GM12878 (cell line): ENCODE measurements at regions of chr7 and their contacts with region 1.

Region 1: GRCh38 chr7:27576360-27576944 is 86.2 kb downstream of the HIBADH start:
- DNase-seq: no peak
- ATAC-seq: peak; percentile 76
- H3K4me3 ChIP-seq: no peak overlapping the region
- H3K27ac ChIP-seq: no peak overlapping the region
- H3K4me1 ChIP-seq: no peaks in the 10 kb centered on the region
- H3K27me3 ChIP-seq: no peaks in the 10 kb centered on the region
- CTCF ChIP-seq: peak; percentile 48 to 55 (median 53); a peak in 5 of 6 replicates
- EP300 ChIP-seq: no peak
- POLR2A ChIP-seq: no peak
- RAD21 ChIP-seq: peak; percentile 59

Region 2: GRCh38 chr7:27025270-27025669 is 551.2 kb before region 1 on chr7:
- CTCF ChIA-PET with region 1: no interaction called
- POLR2A ChIA-PET with region 1: no interaction called
- RAD21 ChIA-PET with region 1: no interaction called
- SMC1A ChIA-PET with region 1: no interaction called
- in situ Hi-C with region 1: no loop called
- intact Hi-C with region 1: no loop called
- DNase-seq: no peak
- ATAC-seq: no peak
- H3K4me3 ChIP-seq: no peak overlapping the region
- H3K27ac ChIP-seq: no peak overlapping the region
- H3K4me1 ChIP-seq: no peaks in the 10 kb centered on the region
- H3K27me3 ChIP-seq: no peaks in the 10 kb centered on the region
- CTCF ChIP-seq: no peak
- EP300 ChIP-seq: no peak
- POLR2A ChIP-seq: no peak
- RAD21 ChIP-seq: no peak

Region 3: DNA sequence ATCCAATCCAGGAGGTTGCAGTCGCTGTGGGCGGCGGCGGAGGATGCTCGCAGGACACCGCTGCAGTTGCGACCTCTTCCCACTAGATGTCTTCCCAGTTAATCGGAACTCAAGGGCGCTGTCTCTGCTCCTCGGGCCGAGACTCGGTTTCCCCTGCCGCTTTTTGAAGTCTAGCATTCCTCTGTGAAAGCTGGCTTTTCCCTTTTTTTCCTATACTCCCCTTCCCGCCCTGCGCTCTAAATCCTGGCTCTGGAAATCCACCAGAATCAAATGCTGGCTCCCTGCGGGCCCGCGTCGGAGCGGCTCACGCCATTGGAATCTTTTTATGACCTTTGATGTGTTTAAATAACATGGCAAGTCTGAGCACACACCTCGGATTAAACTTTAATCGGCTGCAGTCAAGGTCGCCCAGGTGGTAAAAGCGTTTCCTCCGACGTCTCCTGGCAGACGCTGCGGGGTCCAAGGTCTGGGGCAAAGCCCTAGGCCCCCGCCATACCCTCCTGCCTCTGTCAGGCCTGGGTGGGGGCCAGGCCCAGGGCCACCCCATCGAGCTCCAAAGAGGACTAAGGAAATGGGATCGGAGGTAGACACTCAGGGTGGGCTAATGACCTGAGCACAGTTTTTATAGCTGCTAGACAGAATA is 365.9 kb before region 1 on chr7:
- CTCF ChIA-PET with region 1: interaction called, 23 read pairs
- POLR2A ChIA-PET with region 1: no interaction called
- RAD21 ChIA-PET with region 1: interaction called, 8 read pairs
- SMC1A ChIA-PET with region 1: interaction called, 3 read pairs
- in situ Hi-C with region 1: no loop called
- intact Hi-C with region 1: loop called (anchors 5 kb)
- DNase-seq: no peak
- ATAC-seq: peak; percentile 74
- H3K4me3 ChIP-seq: no peak overlapping the region
- H3K27ac ChIP-seq: no peak overlapping the region
- H3K4me1 ChIP-seq: no peaks in the 10 kb centered on the region
- H3K27me3 ChIP-seq: peaks cover 3 to 28% of the 10 kb centered on the region in 2 experiments
- CTCF ChIP-seq: peak; percentile 55 to 72 (median 67)
- EP300 ChIP-seq: no peak
- POLR2A ChIP-seq: no peak
- RAD21 ChIP-seq: peak; percentile 38; the same call in 1 of the 2 replicates

Region 4: GRCh38 chr7:27586825-27587224 is 10.4 kb after region 1 on chr7:
- CTCF ChIA-PET with region 1: interaction called, 18 read pairs
- POLR2A ChIA-PET with region 1: no interaction called
- RAD21 ChIA-PET with region 1: interaction called, 4 read pairs
- SMC1A ChIA-PET with region 1: interaction called, 6 read pairs
- in situ Hi-C with region 1: no loop called
- intact Hi-C with region 1: no loop called
- DNase-seq: peak; percentile 53
- ATAC-seq: peak; percentile 97
- H3K4me3 ChIP-seq: no peak overlapping the region
- H3K27ac ChIP-seq: no peak overlapping the region
- H3K4me1 ChIP-seq: no peaks in the 10 kb centered on the region; the same call in 1 of the 2 replicates
- H3K27me3 ChIP-seq: no peaks in the 10 kb centered on the region
- CTCF ChIP-seq: no peak
- EP300 ChIP-seq: no peak
- POLR2A ChIP-seq: no peak
- RAD21 ChIP-seq: no peak

Region 5: DNA sequence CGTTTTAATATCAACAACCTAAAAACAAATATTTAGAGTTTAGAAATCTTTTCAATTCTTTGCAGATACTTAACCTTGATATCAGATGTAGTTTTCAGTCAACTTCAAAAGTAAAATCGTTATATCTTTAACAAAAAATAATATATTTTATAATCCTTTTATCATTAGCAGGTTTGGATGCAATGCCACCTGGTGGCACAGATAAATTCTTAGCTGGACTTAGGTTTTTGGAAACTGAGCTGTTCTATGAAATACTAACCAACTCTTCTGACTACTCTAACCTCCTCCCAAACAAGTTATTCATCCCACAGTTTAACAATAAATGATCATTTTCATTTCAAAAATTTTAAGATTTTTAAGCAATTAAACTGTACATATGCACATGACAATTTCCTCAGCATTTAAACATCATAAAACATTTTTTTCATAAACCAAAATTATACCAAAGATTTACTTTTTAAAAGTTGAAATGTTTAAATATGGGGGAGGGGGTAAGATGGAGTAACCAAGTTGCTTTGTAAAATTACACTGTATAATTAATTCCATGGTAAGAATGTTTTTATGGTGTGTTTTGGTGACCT is 29.3 kb after region 1 on chr7:
- CTCF ChIA-PET with region 1: interaction called, 24 read pairs
- POLR2A ChIA-PET with region 1: no interaction called
- RAD21 ChIA-PET with region 1: interaction called, 7 read pairs
- SMC1A ChIA-PET with region 1: interaction called, 5 read pairs
- in situ Hi-C with region 1: no loop called
- intact Hi-C with region 1: no loop called
- DNase-seq: no peak
- ATAC-seq: no peak
- H3K4me3 ChIP-seq: no peak overlapping the region
- H3K27ac ChIP-seq: no peak overlapping the region
- H3K4me1 ChIP-seq: no peaks in the 10 kb centered on the region
- H3K27me3 ChIP-seq: no peaks in the 10 kb centered on the region
- CTCF ChIP-seq: peak in 2 of 3 experiments; percentile 33 to 44; a peak in 4 of 6 replicates
- EP300 ChIP-seq: no peak
- POLR2A ChIP-seq: no peak
- RAD21 ChIP-seq: peak; percentile 30

Region 6: DNA sequence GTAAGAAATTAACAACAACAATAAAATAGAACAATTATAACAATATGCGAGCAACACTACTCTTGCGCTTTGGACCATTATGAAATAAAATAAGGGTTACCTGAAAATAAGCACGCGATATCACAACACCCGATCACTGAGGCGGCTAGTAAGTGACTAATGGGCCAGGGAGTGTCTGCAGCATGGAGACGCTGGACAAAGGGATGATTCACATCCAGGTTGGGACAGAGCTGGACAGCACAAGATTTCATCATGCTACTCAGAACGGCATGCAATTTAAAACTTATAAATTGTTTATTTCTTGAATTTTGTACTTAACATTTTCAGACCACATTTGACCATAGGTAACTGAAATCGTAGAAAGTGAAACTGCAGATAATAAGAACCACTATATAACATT is 70.6 kb after region 1 on chr7:
- CTCF ChIA-PET with region 1: no interaction called
- POLR2A ChIA-PET with region 1: no interaction called
- RAD21 ChIA-PET with region 1: no interaction called
- SMC1A ChIA-PET with region 1: no interaction called
- in situ Hi-C with region 1: no loop called
- intact Hi-C with region 1: no loop called
- DNase-seq: no peak
- ATAC-seq: no peak
- H3K4me3 ChIP-seq: no peak overlapping the region
- H3K27ac ChIP-seq: no peak overlapping the region
- H3K4me1 ChIP-seq: no peaks in the 10 kb centered on the region
- H3K27me3 ChIP-seq: no peaks in the 10 kb centered on the region
- CTCF ChIP-seq: no peak
- EP300 ChIP-seq: no peak
- POLR2A ChIP-seq: no peak
- RAD21 ChIP-seq: no peak

Region 7: GRCh38 chr7:27723085-27723484 is 146.6 kb after region 1 on chr7:
- CTCF ChIA-PET with region 1: no interaction called
- POLR2A ChIA-PET with region 1: no interaction called
- RAD21 ChIA-PET with region 1: no interaction called
- SMC1A ChIA-PET with region 1: no interaction called
- in situ Hi-C with region 1: no loop called
- intact Hi-C with region 1: no loop called
- DNase-seq: no peak
- ATAC-seq: peak; percentile 56; the same call in 2 of the 3 replicates
- H3K4me3 ChIP-seq: no peak overlapping the region
- H3K27ac ChIP-seq: no peak overlapping the region
- H3K4me1 ChIP-seq: no peaks in the 10 kb centered on the region; the same call in 1 of the 2 replicates
- H3K27me3 ChIP-seq: no peaks in the 10 kb centered on the region; a peak in 1 of 4 replicates
- CTCF ChIP-seq: peak in 2 of 3 experiments; percentile 4 to 7; a peak in 1 of 6 replicates
- EP300 ChIP-seq: no peak
- POLR2A ChIP-seq: no peak
- RAD21 ChIP-seq: no peak